BJ (cell line): ENCODE measurements at regions of chr4 and their contacts with region 1.

Region 1: GRCh38 chr4:23202712-23203247 is 510.0 kb downstream of the GBA3 start:
- DNase-seq: no peak
- H3K4me3 ChIP-seq: no peak overlapping the region
- H3K27me3 ChIP-seq: no peaks in the 10 kb centered on the region
- CTCF ChIP-seq: no peak

Region 2: DNA sequence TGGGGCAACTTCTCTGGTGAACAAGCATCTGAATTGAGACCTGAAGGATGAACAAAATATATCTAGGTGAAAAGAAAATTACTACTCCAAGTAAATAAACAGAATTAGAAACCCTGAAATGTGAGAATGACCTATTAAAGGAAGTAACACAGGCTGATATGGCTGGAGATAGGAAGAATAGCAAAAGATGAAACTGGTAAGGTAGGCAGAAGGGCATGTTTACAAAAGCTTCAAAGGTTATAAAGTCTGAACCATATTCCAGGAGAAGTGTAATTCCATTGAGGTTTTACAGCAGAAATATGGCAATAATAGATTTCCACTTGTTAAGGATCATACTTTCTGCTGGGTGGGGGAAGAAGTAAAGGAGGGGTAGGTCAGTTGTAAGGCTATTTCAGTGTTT is 58.1 kb before region 1 on chr4:
- CTCF ChIA-PET with region 1: no interaction called
- POLR2A ChIA-PET with region 1: interaction called, 15 read pairs
- DNase-seq: no peak
- H3K4me3 ChIP-seq: no peak overlapping the region
- H3K27me3 ChIP-seq: no peaks in the 10 kb centered on the region
- CTCF ChIP-seq: no peak

Region 3: GRCh38 chr4:23348789-23349498 is 146.2 kb after region 1 on chr4:
- CTCF ChIA-PET with region 1: no interaction called
- POLR2A ChIA-PET with region 1: no interaction called
- DNase-seq: no peak
- H3K4me3 ChIP-seq: no peak overlapping the region
- H3K27me3 ChIP-seq: no peaks in the 10 kb centered on the region
- CTCF ChIP-seq: no peak

Region 4: GRCh38 chr4:23368081-23368697 is 165.4 kb after region 1 on chr4:
- CTCF ChIA-PET with region 1: no interaction called
- POLR2A ChIA-PET with region 1: no interaction called
- DNase-seq: no peak
- H3K4me3 ChIP-seq: no peak overlapping the region
- H3K27me3 ChIP-seq: no peaks in the 10 kb centered on the region
- CTCF ChIP-seq: no peak

Region 5: GRCh38 chr4:23392860-23393458 is 190.2 kb after region 1 on chr4:
- CTCF ChIA-PET with region 1: no interaction called
- POLR2A ChIA-PET with region 1: no interaction called
- DNase-seq: no peak
- H3K4me3 ChIP-seq: no peak overlapping the region
- H3K27me3 ChIP-seq: no peaks in the 10 kb centered on the region
- CTCF ChIP-seq: no peak